ENCODE measurements at regions of chr9 and their contacts with region 1.

Region 1: GRCh38 chr9:10785255-10785654 is 172.5 kb upstream of the PTPRD start:
- DNase-seq: no peak
- ATAC-seq: no peak
- H3K4me3 ChIP-seq: no peak overlapping the region
- H3K27ac ChIP-seq: no peak overlapping the region
- H3K4me1 ChIP-seq: no peaks in the 10 kb centered on the region
- H3K27me3 ChIP-seq: no peaks in the 10 kb centered on the region
- CTCF ChIP-seq: no peak
- POLR2A ChIP-seq: no peak

Region 2: DNA sequence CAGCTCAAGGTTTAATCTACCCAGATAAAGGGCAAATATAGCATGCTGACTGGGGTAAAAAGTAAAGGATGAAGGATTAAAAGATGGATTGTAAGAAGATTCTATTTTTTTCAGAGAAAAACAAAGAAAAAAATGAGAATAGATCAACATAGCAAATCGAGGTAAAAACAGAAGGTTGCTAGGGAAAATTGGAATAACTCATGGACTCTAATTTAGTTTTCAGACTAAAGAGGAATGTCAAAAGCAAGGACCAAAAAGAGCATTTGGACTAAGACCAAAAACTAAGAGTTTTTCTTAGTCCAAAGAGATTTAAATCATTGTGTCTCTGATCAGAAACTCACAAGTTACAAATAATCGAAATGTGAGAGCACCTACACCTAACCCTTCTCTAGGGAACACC is 78.2 kb after region 1 on chr9:
- in situ Hi-C with region 1: no loop called
- intact Hi-C with region 1: no loop called
- DNase-seq: no peak
- ATAC-seq: no peak
- H3K4me3 ChIP-seq: no peak overlapping the region
- H3K27ac ChIP-seq: no peak overlapping the region
- H3K4me1 ChIP-seq: no peaks in the 10 kb centered on the region
- H3K27me3 ChIP-seq: no peaks in the 10 kb centered on the region
- CTCF ChIP-seq: no peak
- POLR2A ChIP-seq: no peak

Region 3: GRCh38 chr9:10875752-10876151 is 90.5 kb after region 1 on chr9:
- in situ Hi-C with region 1: loop called in 1 of 4 experiments (anchors 25 kb)
- intact Hi-C with region 1: no loop called
- DNase-seq: no peak
- ATAC-seq: no peak
- H3K4me3 ChIP-seq: no peak overlapping the region
- H3K27ac ChIP-seq: no peak overlapping the region
- H3K4me1 ChIP-seq: no peaks in the 10 kb centered on the region
- H3K27me3 ChIP-seq: no peaks in the 10 kb centered on the region
- CTCF ChIP-seq: no peak
- POLR2A ChIP-seq: no peak

Region 4: DNA sequence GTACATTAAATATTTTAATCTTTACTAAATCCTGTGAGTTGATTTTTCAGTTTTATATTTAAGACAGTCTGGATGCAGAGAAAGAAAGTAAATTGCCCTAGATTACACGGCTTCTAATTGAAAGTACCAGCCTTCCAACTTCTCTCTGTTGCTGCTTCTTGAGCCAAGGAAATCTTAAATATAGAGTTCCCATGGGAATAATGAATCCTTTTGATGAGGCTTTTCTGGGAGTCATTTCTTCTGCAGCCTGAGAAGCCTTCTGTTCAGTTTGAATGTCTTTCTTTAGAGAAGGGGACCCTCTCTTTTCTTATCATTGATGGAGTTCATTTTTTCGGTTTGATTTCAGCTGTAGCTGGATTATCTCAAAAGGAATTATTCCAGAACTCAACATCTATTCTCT is 144.8 kb after region 1 on chr9:
- in situ Hi-C with region 1: no loop called
- intact Hi-C with region 1: no loop called
- DNase-seq: no peak
- ATAC-seq: no peak
- H3K4me3 ChIP-seq: no peak overlapping the region
- H3K27ac ChIP-seq: no peak overlapping the region
- H3K4me1 ChIP-seq: no peaks in the 10 kb centered on the region
- H3K27me3 ChIP-seq: no peaks in the 10 kb centered on the region
- CTCF ChIP-seq: no peak
- POLR2A ChIP-seq: no peak